ENCODE measurements at regions of chr7 and their contacts with region 1.

Region 1: DNA sequence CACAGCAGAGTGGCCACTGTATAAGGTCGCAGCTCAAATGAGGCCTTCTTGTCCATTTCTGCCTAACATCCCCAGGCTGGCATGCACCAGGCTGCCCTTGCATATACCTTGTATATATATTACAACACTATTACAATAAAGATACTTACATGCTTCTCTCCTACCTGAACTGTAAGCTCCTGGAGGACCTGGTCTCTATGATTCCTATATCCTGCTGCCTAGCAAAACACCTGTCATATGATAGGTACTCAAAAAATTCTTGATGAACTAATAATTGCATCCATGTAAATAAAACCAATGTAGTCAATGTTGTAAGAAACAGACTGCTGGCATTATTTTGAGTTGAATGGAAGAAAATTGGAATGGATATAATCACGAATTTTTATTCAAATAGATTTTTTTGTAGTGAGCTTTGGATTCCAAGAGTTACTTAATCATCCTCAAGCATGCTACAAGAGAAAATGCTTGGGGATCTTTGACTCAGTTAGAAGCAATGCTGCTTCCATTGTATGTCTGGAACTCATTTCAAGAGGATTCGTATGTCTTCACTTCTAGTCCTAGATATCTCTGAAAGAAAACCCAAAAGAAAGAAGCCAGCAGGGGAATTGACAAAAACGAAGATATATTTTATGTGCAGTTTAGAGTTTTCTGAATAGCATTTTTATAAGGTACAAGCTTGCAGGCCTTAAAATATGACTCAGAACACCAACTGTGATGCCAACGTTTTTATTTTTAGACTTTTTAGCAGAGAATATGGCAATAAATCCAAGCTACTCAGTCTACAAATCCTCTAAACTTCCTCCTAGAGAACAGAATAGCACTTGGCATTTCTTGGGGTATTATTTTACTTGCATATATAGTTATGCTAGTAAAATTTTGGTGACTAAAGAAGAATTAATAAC is 53.1 kb downstream of the OSBPL3 start:
- DNase-seq: no peak
- H3K4me3 ChIP-seq: no peak overlapping the region
- H3K27ac ChIP-seq: no peak overlapping the region
- H3K4me1 ChIP-seq: peaks cover 42% of the 10 kb centered on the region
- H3K27me3 ChIP-seq: no peaks in the 10 kb centered on the region
- CTCF ChIP-seq: no peak

Region 2: DNA sequence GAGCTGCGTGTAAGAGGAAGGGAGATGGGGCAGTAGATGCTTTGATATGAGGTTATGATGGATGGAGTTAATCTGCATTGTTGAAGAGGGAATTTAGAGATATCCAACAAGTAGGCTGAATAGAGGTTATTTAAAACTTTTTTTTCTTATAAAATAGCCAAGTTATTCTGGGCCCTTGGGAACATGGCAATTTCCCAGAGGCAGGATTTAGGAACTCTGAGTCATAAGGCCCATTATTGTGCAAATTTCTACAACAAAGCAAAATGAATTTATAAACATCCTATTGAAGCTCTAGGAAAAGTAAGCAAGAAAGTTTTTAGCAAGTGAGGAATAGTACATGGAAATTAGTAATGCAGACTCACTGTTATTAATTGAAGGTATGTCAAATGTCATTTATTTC is 803.8 kb before region 1 on chr7:
- CTCF ChIA-PET with region 1: no interaction called
- dilution Hi-C with region 1: no loop called
- in situ Hi-C with region 1: no loop called
- intact Hi-C with region 1: no loop called
- DNase-seq: no peak
- H3K4me3 ChIP-seq: no peak overlapping the region
- H3K27ac ChIP-seq: no peak overlapping the region
- H3K4me1 ChIP-seq: no peaks in the 10 kb centered on the region
- H3K27me3 ChIP-seq: no peaks in the 10 kb centered on the region
- CTCF ChIP-seq: no peak

Region 3: DNA sequence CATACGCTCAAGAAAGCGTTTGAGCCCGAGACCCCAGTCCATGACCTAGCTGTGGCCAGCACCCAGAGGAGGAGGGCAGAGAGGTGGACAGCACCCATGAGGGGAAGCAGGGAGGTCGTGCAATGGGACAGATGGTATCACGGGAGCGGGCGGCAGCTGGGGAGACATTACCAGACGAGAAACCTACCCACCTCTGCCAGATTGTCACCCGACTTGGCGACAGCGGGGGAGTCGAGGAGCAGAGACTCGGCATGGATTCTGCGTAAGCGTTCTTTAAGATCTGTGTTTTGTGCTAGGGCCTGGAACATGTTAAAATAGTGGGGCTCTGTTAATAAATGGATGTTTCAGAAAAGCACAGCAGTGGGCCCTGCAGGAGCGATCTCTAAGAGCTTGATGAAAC is 78.0 kb before region 1 on chr7:
- CTCF ChIA-PET with region 1: no interaction called
- dilution Hi-C with region 1: loop called (anchors 5 kb)
- in situ Hi-C with region 1: no loop called
- intact Hi-C with region 1: no loop called
- DNase-seq: no peak
- H3K4me3 ChIP-seq: no peak overlapping the region
- H3K27ac ChIP-seq: no peak overlapping the region
- H3K4me1 ChIP-seq: peaks cover 6% of the 10 kb centered on the region
- H3K27me3 ChIP-seq: no peaks in the 10 kb centered on the region
- CTCF ChIP-seq: no peak

Region 4: DNA sequence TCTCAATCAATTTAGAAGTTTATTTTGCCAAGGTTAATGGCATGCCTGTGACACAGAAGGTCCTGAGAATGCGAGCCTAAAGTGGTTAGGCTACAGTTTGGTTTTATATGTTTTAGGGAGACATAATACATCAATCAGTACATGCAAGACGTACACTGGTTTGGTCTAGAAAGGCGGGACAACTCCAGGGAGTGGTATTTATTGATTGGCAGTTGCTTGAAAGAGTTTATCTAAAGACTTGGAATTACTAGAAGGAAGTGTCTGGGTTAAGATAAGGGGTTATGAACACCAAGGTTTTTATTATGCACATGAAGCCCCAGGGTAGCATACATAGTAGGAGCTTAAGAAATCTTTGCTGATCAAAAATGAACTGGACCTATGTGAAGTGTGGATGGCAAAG is 279.9 kb after region 1 on chr7:
- CTCF ChIA-PET with region 1: no interaction called
- dilution Hi-C with region 1: no loop called
- in situ Hi-C with region 1: no loop called
- intact Hi-C with region 1: no loop called
- DNase-seq: no peak
- H3K4me3 ChIP-seq: no peak overlapping the region
- H3K27ac ChIP-seq: no peak overlapping the region
- H3K4me1 ChIP-seq: no peaks in the 10 kb centered on the region
- H3K27me3 ChIP-seq: no peaks in the 10 kb centered on the region
- CTCF ChIP-seq: no peak

Region 5: GRCh38 chr7:25244254-25245033 is 317.6 kb after region 1 on chr7:
- CTCF ChIA-PET with region 1: no interaction called
- dilution Hi-C with region 1: no loop called
- in situ Hi-C with region 1: no loop called
- intact Hi-C with region 1: no loop called
- DNase-seq: no peak
- H3K4me3 ChIP-seq: no peak overlapping the region
- H3K27ac ChIP-seq: no peak overlapping the region
- H3K4me1 ChIP-seq: no peaks in the 10 kb centered on the region
- H3K27me3 ChIP-seq: peaks cover 2% of the 10 kb centered on the region
- CTCF ChIP-seq: no peak